ENCODE measurements at regions of chr9 and their contacts with region 1.

Region 1: GRCh38 chr9:131334629-131335367 is 45.3 kb downstream of the PLPP7 start:
- DNase-seq: no peak
- CTCF ChIP-seq: no peak

Region 2: DNA sequence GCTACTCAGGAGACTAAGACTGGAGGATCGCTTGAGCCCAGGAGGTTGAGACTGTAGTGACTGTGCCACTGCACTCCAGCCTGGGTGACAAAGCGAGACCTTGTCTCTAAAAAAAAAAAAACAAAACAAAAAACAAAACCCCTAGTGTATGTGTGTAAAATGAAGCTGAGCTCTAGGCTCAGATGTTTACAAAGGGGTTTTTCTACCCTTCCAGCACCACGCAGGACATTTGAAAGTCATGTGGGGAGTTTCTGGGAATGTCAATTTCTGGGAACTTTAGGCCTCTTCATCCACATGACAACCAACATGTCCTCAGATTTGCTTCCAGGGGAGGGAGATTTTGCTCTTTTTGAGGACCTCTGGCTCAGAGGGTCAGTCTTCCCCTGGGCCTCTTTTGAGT is 280.9 kb before region 1 on chr9:
- CTCF ChIA-PET with region 1: interaction called, 94 read pairs
- POLR2A ChIA-PET with region 1: no interaction called
- DNase-seq: no peak
- CTCF ChIP-seq: no peak

Region 3: GRCh38 chr9:131167146-131167692 is 167.6 kb before region 1 on chr9:
- CTCF ChIA-PET with region 1: interaction called, 13 read pairs
- POLR2A ChIA-PET with region 1: no interaction called
- DNase-seq: no peak
- CTCF ChIP-seq: no peak

Region 4: DNA sequence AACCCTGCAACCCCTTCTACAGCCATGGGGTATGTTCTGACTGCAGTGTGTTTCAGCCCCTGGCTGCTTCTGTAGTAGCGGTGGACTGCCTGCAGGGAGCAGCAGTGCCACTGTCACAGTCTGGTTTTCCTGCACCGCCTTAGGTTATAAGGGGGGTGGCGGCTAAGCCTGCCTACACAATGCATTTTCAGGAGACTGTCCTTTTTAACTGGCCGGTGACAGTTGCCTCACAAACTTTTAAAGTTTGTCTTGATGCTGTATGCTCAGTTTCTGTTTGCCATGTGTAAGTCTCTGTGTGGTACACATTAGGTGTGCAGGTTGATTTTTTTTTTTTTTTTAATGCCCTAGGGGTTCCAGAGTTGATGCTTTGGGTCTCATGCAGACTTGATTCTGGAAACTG is 156.4 kb before region 1 on chr9:
- CTCF ChIA-PET with region 1: interaction called, 156 read pairs
- POLR2A ChIA-PET with region 1: interaction called, 5 read pairs
- DNase-seq: peak; percentile 82
- CTCF ChIP-seq: peak; percentile 99

Region 5: GRCh38 chr9:131190191-131190590 is 144.6 kb before region 1 on chr9:
- CTCF ChIA-PET with region 1: interaction called, 10 read pairs
- POLR2A ChIA-PET with region 1: no interaction called
- DNase-seq: no peak
- CTCF ChIP-seq: no peak

Region 6: GRCh38 chr9:131317011-131317422 is 17.8 kb before region 1 on chr9:
- CTCF ChIA-PET with region 1: interaction called, 11 read pairs
- POLR2A ChIA-PET with region 1: no interaction called
- DNase-seq: no peak
- CTCF ChIP-seq: no peak

Region 7: DNA sequence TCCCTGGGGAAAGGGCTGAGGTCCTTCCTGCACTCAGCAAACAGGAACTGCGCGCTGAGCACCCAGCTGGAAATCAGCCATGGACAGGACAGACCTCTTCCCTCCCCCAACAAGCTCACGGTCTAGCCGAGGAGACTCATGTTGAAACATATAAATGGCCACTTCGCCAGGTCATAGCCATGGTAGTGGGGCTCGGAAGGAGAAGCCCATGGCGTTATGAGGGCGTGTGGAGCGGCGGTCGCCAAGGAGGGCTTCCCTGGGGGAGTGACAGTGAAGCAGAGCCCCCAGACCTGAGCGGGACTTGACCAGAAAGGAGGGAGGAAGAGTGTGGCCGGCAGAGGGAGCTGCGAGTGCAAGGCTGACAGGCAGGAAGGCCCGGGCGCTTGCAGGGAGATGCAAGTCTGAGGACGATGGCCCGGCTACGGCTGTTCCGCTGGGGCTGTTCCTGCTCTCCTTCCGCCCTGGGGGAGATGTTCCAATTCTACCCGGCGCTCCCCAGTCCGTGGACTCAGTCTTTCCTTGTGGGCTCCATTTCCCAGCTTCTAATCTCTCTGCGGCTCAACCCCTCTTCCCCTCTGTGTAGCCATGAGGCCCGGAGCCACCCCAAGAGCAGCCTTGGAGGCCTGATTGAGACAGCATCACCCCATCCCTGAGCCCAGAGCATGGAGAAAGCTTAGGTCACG is 15.2 kb after region 1 on chr9:
- CTCF ChIA-PET with region 1: interaction called, 30 read pairs
- POLR2A ChIA-PET with region 1: no interaction called
- DNase-seq: peak; percentile 92
- CTCF ChIP-seq: peak; percentile 90

Region 8: DNA sequence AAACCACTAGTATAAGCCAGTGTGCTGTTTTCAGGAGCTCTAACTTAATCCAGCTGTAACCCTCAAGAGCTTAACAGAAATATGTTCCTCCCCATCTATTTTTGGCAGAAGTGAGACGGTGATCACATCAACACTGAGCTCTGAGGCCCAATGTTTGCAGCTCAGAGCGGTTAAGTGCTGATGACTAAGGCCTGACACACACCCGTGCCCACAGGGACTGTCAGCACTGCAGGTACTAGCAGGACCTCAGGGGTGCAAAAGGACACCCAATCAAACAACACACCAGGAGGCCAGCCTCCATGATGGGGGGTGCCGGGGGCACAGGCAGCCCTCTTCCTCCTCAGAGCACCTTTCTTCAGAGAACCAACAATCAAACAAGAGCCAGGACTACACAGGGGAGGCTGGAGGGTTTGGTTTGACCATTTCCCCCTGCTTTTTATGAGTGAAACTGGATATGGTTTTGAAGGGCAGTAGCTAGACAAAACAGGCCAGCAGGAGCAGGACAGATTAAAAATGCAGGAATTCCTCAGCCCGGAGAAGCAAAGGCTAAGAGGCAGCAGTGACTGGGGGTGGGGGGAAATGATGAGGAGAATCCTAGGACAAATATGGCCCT is 343.8 kb after region 1 on chr9:
- CTCF ChIA-PET with region 1: no interaction called
- POLR2A ChIA-PET with region 1: no interaction called
- DNase-seq: peak; percentile 87
- CTCF ChIP-seq: no peak